T-cell (primary cell): ENCODE measurements at regions of chr1 and their contacts with region 1.

Region 1: GRCh38 chr1:150543500-150544141 is 5.6 kb upstream of the ADAMTSL4 start:
- DNase-seq: no peak
- ATAC-seq: no peak
- H3K4me3 ChIP-seq: no peak overlapping the region
- H3K4me3 Mint-ChIP-seq: no peak overlapping the region
- H3K27ac ChIP-seq: no peak overlapping the region
- H3K27ac Mint-ChIP-seq: no peak overlapping the region
- H3K4me1 ChIP-seq: peaks cover 0 to 4% of the 10 kb centered on the region in 2 experiments
- H3K4me1 Mint-ChIP-seq: peaks cover 3 to 4% (median 4%) of the 10 kb centered on the region in 3 donors
- H3K27me3 ChIP-seq: peaks cover 2 to 51% of the 10 kb centered on the region in 2 experiments
- H3K27me3 Mint-ChIP-seq: peaks cover 11 to 33% of the 10 kb centered on the region in 2 donors

Region 2: DNA sequence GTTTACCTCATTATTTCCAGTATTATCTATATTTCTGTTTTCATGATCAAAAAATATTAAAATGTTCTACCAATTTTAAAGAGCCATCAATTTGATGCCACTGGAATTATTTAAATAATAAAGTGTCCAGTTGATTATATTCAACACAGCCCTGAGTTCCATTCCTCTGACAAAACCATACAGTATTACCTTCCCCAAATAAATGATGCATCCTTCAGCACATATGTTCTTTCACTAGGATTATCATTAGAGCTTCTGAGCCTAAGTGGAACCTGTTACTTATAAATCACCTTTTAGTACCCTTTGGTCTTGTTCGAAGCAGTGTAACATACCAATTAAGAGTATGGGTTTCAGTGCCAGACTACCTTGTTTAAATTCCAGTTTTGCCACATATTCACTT is 411.2 kb before region 1 on chr1:
- CTCF ChIA-PET with region 1: no interaction called
- POLR2A ChIA-PET with region 1: interaction called in 1 of 2 experiments, 14 read pairs
- DNase-seq: no peak
- ATAC-seq: no peak
- H3K4me3 ChIP-seq: no peak overlapping the region
- H3K4me3 Mint-ChIP-seq: no peak overlapping the region
- H3K27ac ChIP-seq: no peak overlapping the region
- H3K27ac Mint-ChIP-seq: no peak overlapping the region
- H3K4me1 ChIP-seq: no peaks in the 10 kb centered on the region
- H3K4me1 Mint-ChIP-seq: peaks cover 3 to 7% (median 6%) of the 10 kb centered on the region in 3 donors
- H3K27me3 ChIP-seq: no peaks in the 10 kb centered on the region
- H3K27me3 Mint-ChIP-seq: no peaks in the 10 kb centered on the region

Region 3: DNA sequence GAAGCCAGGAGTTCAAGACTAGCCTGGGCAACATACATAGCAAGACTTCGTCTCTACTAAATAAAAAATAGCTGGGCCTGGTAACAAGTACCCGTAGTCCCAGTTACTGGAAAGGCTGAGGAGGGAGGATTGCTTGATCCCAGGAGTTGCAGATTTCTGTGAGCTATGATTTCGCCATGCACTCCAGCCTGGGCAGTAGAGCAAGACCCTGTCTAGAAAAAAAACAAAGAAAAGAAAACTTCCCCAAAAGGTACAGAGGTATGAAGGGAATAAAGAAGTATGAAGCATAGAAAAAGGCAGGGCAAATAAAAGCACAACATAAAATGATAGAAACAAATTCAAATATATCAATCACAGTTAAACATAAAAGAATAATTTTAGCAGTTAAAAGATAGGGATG is 151.0 kb before region 1 on chr1:
- CTCF ChIA-PET with region 1: no interaction called
- POLR2A ChIA-PET with region 1: interaction called in 1 of 2 experiments, 14 read pairs
- DNase-seq: no peak
- ATAC-seq: no peak
- H3K4me3 ChIP-seq: no peak overlapping the region
- H3K4me3 Mint-ChIP-seq: no peak overlapping the region
- H3K27ac ChIP-seq: no peak overlapping the region
- H3K27ac Mint-ChIP-seq: no peak overlapping the region
- H3K4me1 ChIP-seq: peaks cover 0 to 11% of the 10 kb centered on the region in 2 experiments
- H3K4me1 Mint-ChIP-seq: peaks cover 64 to 67% (median 65%) of the 10 kb centered on the region in 3 donors
- H3K27me3 ChIP-seq: no peaks in the 10 kb centered on the region
- H3K27me3 Mint-ChIP-seq: no peaks in the 10 kb centered on the region

Region 4: GRCh38 chr1:150642296-150642695 is 98.7 kb after region 1 on chr1:
- CTCF ChIA-PET with region 1: no interaction called
- POLR2A ChIA-PET with region 1: no interaction called
- DNase-seq: no peak
- ATAC-seq: no peak
- H3K4me3 ChIP-seq: no peak overlapping the region
- H3K4me3 Mint-ChIP-seq: no peak overlapping the region
- H3K27ac ChIP-seq: no peak overlapping the region
- H3K27ac Mint-ChIP-seq: no peak overlapping the region
- H3K4me1 ChIP-seq: no peaks in the 10 kb centered on the region
- H3K4me1 Mint-ChIP-seq: no peaks in the 10 kb centered on the region
- H3K27me3 ChIP-seq: no peaks in the 10 kb centered on the region
- H3K27me3 Mint-ChIP-seq: no peaks in the 10 kb centered on the region